Mucosa of descending colon (tissue), 3 donors: ENCODE measurements at regions of chr2 and their contacts with region 1.

Region 1: GRCh38 chr2:205675861-205676516 is 6.3 kb upstream of the NRP2 start:
- DNase-seq: peak in 1 of 3 donors; percentile 63
- ATAC-seq: peak; percentile 81
- H3K4me3 ChIP-seq: no peak overlapping the region
- H3K4me1 ChIP-seq: no peaks in the 10 kb centered on the region
- CTCF ChIP-seq: no peak

Region 2: DNA sequence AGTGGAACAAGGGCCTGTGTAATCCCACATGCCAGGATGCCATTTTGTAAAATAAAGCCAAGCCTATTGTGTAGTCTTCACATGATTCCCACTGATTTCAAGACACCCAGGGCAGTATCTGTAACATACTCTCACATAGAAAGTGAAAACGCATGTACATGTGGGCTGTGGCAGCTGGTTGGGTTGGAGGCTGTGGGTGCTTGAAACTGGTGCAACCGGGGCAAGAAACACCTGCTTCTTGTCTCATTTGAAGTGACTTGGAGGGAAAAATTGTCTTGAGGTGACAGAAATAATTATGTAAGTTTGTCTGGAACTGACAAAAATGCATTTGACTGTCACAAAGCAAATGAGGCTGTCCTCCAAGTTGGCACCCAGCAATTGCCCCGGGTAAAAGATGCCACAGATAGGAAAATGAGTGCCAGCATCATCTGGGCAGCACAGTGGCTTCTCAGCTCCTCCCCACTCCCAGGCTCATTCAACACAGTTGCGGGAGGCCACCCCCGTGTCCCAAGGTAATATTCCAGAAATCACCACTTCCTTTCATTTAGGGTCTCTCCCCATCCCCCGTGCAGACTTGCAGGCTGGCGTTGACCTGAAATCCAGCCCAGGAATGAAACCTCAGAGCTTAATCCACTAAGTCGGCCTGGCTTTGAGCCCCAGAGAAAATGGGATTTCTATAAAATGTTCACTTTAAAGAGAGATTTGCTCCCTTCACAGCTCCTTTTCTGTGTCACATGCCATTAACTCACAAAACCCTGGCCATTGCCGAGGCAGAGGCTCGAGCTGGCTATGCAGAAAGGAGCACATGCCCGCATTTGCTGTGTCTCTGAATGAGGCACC is 1424.6 kb before region 1 on chr2:
- intact Hi-C with region 1: loop called in 1 of 2 experiments (anchors 10 kb)
- DNase-seq: no peak
- ATAC-seq: no peak
- H3K4me3 ChIP-seq: no peak overlapping the region
- H3K4me1 ChIP-seq: no peaks in the 10 kb centered on the region
- CTCF ChIP-seq: no peak

Region 3: GRCh38 chr2:204325468-204325867 is 1350.5 kb before region 1 on chr2:
- intact Hi-C with region 1: loop called (anchors 5 to 10 kb)
- DNase-seq: peak in 1 of 3 donors; percentile 74
- ATAC-seq: peak; percentile 91
- H3K4me3 ChIP-seq: no peak overlapping the region
- H3K4me1 ChIP-seq: no peaks in the 10 kb centered on the region
- CTCF ChIP-seq: peak; percentile 34

Region 4: GRCh38 chr2:204871231-204871953 is 804.6 kb before region 1 on chr2:
- intact Hi-C with region 1: loop called in 1 of 2 experiments (anchors 10 kb)
- DNase-seq: no peak
- ATAC-seq: peak; percentile 33
- H3K4me3 ChIP-seq: no peak overlapping the region
- H3K4me1 ChIP-seq: no peaks in the 10 kb centered on the region
- CTCF ChIP-seq: no peak